WTC11 (cell line): ENCODE measurements at regions of chr10 and their contacts with region 1.

Region 1: GRCh38 chr10:123582084-123582989 is 83.8 kb upstream of the GPR26 start:
- DNase-seq: peak; percentile 92
- ATAC-seq: peak; percentile 68
- H3K4me3 Mint-ChIP-seq: no peak overlapping the region
- H3K27ac Mint-ChIP-seq: no peak overlapping the region
- H3K4me1 Mint-ChIP-seq: peaks cover 27% of the 10 kb centered on the region
- H3K27me3 Mint-ChIP-seq: peaks cover 19% of the 10 kb centered on the region
- CTCF ChIP-seq: peak; percentile 60

Region 2: DNA sequence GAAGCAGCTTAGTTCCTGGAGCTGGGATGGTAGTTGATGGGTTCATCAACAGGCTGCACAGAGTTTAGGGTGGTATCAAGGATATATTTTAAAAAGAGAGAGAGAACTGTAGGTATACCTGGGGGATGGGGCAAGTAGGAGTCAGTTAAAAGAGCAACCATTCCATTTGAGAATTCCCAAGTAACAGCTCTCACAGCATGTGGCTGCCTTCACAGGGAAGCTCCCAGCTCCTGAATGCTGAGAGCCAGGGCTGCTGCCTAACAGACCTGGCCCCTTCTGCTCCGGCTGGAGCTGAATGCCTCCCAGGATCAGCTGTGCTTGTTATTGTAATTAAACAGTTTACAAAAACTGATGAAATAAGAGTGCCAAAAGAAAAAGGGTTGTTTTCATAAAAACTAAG is 25.0 kb after region 1 on chr10:
- CTCF ChIA-PET with region 1: interaction called, 13 read pairs
- POLR2A ChIA-PET with region 1: no interaction called
- DNase-seq: peak; percentile 73
- ATAC-seq: peak; percentile 93
- H3K4me3 Mint-ChIP-seq: peak overlapping the region; percentile 47
- H3K27ac Mint-ChIP-seq: peak overlapping the region; percentile 81
- H3K4me1 Mint-ChIP-seq: peaks cover 52% of the 10 kb centered on the region
- H3K27me3 Mint-ChIP-seq: peaks cover 15% of the 10 kb centered on the region
- CTCF ChIP-seq: no peak

Region 3: GRCh38 chr10:123655751-123656150 is 73.4 kb after region 1 on chr10:
- CTCF ChIA-PET with region 1: interaction called, 46 read pairs
- POLR2A ChIA-PET with region 1: no interaction called
- DNase-seq: peak; percentile 76
- ATAC-seq: peak; percentile 98
- H3K4me3 Mint-ChIP-seq: no peak overlapping the region
- H3K27ac Mint-ChIP-seq: no peak overlapping the region
- H3K4me1 Mint-ChIP-seq: peaks cover 16% of the 10 kb centered on the region
- H3K27me3 Mint-ChIP-seq: no peaks in the 10 kb centered on the region
- CTCF ChIP-seq: no peak